ENCODE measurements at regions of chr1 and their contacts with region 1.

Region 1: DNA sequence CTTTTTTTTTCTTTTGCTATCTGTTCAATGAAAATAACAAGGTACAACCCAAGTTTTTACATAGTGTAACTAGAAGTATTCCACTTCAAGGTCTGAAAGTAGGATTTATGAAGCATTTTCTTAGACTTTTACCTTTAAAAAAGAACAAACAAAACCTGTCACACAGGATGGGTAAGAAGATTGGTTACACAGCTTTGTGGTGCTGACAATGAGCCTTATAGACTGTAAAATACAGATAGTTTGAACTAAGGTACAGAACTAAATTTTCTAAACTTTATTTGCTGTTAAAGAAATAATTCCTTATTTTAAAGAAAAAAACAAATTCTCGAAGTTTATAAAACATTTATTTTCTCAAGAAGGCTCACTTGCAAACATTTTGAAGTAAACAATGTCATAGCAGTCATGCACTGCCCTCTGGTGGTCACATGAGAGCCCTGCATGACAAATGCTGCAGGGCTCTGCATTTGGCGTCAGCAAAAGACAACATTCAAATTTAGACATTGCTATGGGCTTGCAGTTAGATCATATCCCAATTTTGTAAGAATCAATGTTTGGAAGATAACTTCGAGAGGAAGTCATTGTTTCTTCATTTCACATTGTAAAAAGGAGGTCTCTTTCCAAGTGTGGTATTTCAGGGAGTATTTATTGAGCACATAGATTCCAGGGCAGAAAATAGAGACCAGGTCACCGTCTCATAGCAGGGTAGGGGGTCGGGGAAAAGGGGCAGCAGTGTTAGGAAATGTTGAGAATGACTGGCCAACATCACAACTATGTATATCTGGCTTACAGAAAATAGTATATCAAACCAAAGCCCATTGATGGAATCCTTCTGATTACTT is 115.3 kb upstream of the FMN2 start:
- DNase-seq: peak; percentile 46 to 72 (median 68)
- ATAC-seq: peak; percentile 77
- H3K4me3 ChIP-seq: no peak overlapping the region
- H3K27ac ChIP-seq: no peak overlapping the region
- H3K4me1 ChIP-seq: no peaks in the 10 kb centered on the region
- H3K27me3 ChIP-seq: no peaks in the 10 kb centered on the region
- CTCF ChIP-seq: peak; percentile 64 to 89 (median 87)
- EP300 ChIP-seq: no peak
- POLR2A ChIP-seq: no peak
- RAD21 ChIP-seq: peak; percentile 63 to 78

Region 2: DNA sequence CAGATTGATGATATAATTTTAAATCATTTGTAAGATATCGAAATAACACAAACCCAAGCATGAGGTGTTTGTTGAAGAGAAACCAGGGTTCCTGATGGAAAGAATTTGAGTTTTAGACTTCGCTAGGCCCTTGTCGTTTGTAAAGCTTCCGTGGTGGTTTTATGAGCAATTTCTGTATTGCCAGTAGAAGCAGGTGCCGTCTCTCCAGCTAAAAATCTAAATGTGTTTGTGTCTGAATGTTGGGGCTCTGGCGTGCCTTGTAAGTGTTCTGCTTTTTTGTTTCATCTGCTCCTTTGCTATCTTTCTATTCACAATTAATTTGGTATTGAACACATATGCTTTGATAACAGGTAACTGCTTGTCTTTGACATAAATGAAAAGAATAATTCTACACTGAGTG is 562.4 kb before region 1 on chr1:
- CTCF ChIA-PET with region 1: no interaction called
- POLR2A ChIA-PET with region 1: no interaction called
- in situ Hi-C with region 1: no loop called
- intact Hi-C with region 1: loop called (anchors 5 kb)
- DNase-seq: no peak
- ATAC-seq: no peak
- H3K4me3 ChIP-seq: no peak overlapping the region
- H3K27ac ChIP-seq: no peak overlapping the region
- H3K4me1 ChIP-seq: no peaks in the 10 kb centered on the region
- H3K27me3 ChIP-seq: no peaks in the 10 kb centered on the region
- CTCF ChIP-seq: no peak
- EP300 ChIP-seq: no peak
- POLR2A ChIP-seq: no peak
- RAD21 ChIP-seq: no peak

Region 3: GRCh38 chr1:240056350-240056749 is 80.0 kb after region 1 on chr1:
- CTCF ChIA-PET with region 1: no interaction called
- POLR2A ChIA-PET with region 1: no interaction called
- in situ Hi-C with region 1: no loop called
- intact Hi-C with region 1: no loop called
- DNase-seq: no peak
- ATAC-seq: no peak
- H3K4me3 ChIP-seq: no peak overlapping the region
- H3K27ac ChIP-seq: no peak overlapping the region
- H3K4me1 ChIP-seq: no peaks in the 10 kb centered on the region
- H3K27me3 ChIP-seq: no peaks in the 10 kb centered on the region
- CTCF ChIP-seq: no peak
- EP300 ChIP-seq: no peak
- POLR2A ChIP-seq: no peak
- RAD21 ChIP-seq: no peak

Region 4: DNA sequence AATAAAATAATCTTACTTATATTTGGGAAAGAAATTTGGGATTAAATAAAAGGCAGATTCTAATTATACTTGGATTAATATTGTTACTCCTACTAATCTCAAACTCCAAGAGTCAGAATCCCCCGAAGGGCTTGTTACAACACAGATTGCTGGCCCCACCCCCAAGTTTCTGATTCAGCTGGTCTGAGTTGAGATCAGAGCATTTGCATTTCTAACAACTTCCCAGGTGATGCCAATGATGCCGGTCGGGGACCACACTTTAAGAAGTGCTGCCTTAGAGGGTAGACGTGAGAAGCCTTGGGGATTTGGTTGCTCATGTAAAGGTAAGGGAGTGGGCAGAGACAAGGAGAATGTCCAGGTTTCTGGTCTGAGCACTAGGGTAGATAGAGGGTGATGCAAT is 162.5 kb after region 1 on chr1:
- CTCF ChIA-PET with region 1: no interaction called
- POLR2A ChIA-PET with region 1: no interaction called
- in situ Hi-C with region 1: no loop called
- intact Hi-C with region 1: no loop called
- DNase-seq: no peak
- ATAC-seq: no peak
- H3K4me3 ChIP-seq: no peak overlapping the region
- H3K27ac ChIP-seq: no peak overlapping the region
- H3K4me1 ChIP-seq: no peaks in the 10 kb centered on the region
- H3K27me3 ChIP-seq: no peaks in the 10 kb centered on the region
- CTCF ChIP-seq: no peak
- EP300 ChIP-seq: no peak
- POLR2A ChIP-seq: no peak
- RAD21 ChIP-seq: no peak

Region 5: GRCh38 chr1:240155605-240156004 is 179.3 kb after region 1 on chr1:
- CTCF ChIA-PET with region 1: no interaction called
- POLR2A ChIA-PET with region 1: no interaction called
- in situ Hi-C with region 1: no loop called
- intact Hi-C with region 1: no loop called
- DNase-seq: no peak
- ATAC-seq: no peak
- H3K4me3 ChIP-seq: no peak overlapping the region
- H3K27ac ChIP-seq: no peak overlapping the region
- H3K4me1 ChIP-seq: no peaks in the 10 kb centered on the region
- H3K27me3 ChIP-seq: no peaks in the 10 kb centered on the region
- CTCF ChIP-seq: no peak
- EP300 ChIP-seq: no peak
- POLR2A ChIP-seq: no peak
- RAD21 ChIP-seq: no peak

Measured in K562 (cell line).